ENCODE measurements at regions of chr4 and their contacts with region 1.

Region 1: GRCh38 chr4:58983887-58984286 is 1873.7 kb upstream of the IGFBP7 start:
- DNase-seq: no peak
- H3K4me3 ChIP-seq: no peak overlapping the region
- H3K27ac ChIP-seq: no peak overlapping the region
- H3K4me1 ChIP-seq: no peaks in the 10 kb centered on the region
- H3K27me3 ChIP-seq: no peaks in the 10 kb centered on the region
- CTCF ChIP-seq: no peak
- POLR2A ChIP-seq: no peak

Region 2: GRCh38 chr4:57989430-57989829 is 994.5 kb before region 1 on chr4:
- intact Hi-C with region 1: loop called (anchors 10 kb)
- DNase-seq: no peak
- H3K4me3 ChIP-seq: no peak overlapping the region
- H3K27ac ChIP-seq: no peak overlapping the region
- H3K4me1 ChIP-seq: no peaks in the 10 kb centered on the region
- H3K27me3 ChIP-seq: no peaks in the 10 kb centered on the region
- CTCF ChIP-seq: no peak
- POLR2A ChIP-seq: no peak

Region 3: GRCh38 chr4:58113126-58113525 is 870.8 kb before region 1 on chr4:
- intact Hi-C with region 1: no loop called
- DNase-seq: no peak
- H3K4me3 ChIP-seq: no peak overlapping the region
- H3K27ac ChIP-seq: no peak overlapping the region
- H3K4me1 ChIP-seq: no peaks in the 10 kb centered on the region
- H3K27me3 ChIP-seq: no peaks in the 10 kb centered on the region
- CTCF ChIP-seq: no peak
- POLR2A ChIP-seq: no peak

Region 4: DNA sequence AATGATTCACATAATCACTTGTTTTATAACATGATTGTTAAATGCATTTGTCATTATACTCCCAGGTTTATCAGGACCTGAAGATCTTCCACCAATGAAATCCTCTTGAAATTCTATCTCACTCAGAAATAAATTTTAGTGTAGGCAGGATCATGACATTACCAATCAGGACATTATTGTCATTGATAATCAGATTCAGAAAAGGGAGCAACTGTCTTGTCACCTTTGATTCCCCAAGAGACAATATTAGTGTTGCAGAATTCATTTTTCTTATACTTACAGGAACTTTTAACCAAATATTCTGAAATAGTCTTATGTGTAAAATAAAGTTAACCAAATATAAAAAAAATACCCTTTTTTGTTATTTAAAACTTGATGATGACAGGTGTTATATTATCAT is 323.7 kb after region 1 on chr4:
- intact Hi-C with region 1: loop called (anchors 5 kb)
- DNase-seq: no peak
- H3K4me3 ChIP-seq: no peak overlapping the region
- H3K27ac ChIP-seq: no peak overlapping the region
- H3K4me1 ChIP-seq: no peaks in the 10 kb centered on the region
- H3K27me3 ChIP-seq: no peaks in the 10 kb centered on the region
- CTCF ChIP-seq: no peak
- POLR2A ChIP-seq: no peak